Motor neuron (in vitro differentiated cells): ENCODE measurements at regions of chr20 and their contacts with region 1.

Region 1: GRCh38 chr20:62782149-62782892 is 14.0 kb upstream of the MRGBP start:
- ATAC-seq: no peak
- H3K4me3 ChIP-seq: no peak overlapping the region
- H3K27ac ChIP-seq: peak overlapping the region in 1 of 2 donors; percentile 56
- H3K4me1 ChIP-seq: peaks cover 36 to 50% of the 10 kb centered on the region in 2 donors

Region 2: DNA sequence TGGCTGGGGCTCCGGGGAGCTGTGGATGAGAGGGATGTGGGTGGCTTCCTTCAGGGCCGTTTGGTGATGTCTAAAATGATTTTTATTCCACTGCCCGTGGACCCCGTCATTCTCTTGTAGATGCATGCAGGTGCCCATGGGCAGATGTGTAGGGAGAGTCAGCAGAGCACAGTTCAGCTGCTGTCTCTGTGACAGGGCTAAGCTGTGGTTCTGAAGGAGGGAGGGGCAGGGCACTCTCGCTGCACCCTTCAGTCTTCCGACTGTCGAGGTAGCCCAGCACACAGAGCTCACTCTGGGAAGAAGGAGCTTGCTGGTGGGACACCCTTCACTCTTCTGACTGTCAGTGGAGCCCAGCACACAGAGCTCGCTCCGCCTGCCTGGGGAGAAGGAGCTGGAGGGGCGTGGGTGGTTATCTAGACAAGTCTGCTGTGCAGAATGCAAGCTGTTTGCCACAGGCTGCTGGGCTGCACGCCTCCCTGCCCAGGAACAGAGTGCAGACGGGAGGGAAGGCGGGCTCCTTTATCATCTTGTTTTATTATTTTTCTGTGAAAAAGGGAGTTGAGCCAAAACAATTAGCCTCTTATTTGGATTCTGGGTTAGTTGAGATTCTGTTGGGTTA is 507.9 kb before region 1 on chr20:
- in situ Hi-C with region 1: no loop called
- ATAC-seq: peak in 3 of 8 experiments; percentile 9 to 91 (median 79)
- H3K4me3 ChIP-seq: no peak overlapping the region
- H3K27ac ChIP-seq: no peak overlapping the region
- H3K4me1 ChIP-seq: no peaks in the 10 kb centered on the region

Region 3: DNA sequence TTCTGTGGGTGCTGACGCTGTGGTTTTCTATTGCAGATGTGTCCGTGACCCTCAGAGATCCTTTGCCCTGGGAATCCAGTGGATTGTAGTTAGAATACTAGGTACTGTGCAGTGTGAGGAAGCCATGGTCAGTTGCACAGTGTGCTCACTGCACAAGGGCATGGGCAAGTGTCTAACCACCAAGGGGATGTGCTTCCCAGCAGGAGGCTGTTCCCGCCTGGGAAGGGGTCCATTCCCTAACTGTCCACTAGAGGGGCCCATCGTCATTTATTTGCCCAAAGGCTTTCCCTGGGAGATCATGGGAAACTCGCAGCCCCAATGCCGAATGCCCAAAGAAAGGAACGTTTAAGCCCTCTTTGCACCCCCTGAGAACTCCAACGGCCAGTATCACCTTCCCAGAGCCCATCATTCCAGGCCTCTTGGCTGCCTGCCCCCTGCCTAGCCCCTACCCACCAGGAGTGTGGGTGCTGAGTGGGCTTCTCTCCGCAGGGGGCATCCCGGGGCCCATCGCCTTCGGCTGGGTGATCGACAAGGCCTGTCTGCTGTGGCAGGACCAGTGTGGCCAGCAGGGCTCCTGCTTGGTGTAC is 113.8 kb before region 1 on chr20:
- in situ Hi-C with region 1: loop called in 3 of 9 experiments (anchors 10 to 25 kb)
- ATAC-seq: peak; percentile 23 to 83 (median 64)
- H3K4me3 ChIP-seq: no peak overlapping the region
- H3K27ac ChIP-seq: no peak overlapping the region
- H3K4me1 ChIP-seq: peaks cover 22 to 23% of the 10 kb centered on the region in 2 donors